ENCODE measurements at regions of chr5 and their contacts with region 1.

Region 1: GRCh38 chr5:103224118-103224893 is 34.3 kb upstream of the MACIR start:
- DNase-seq: peak; percentile 62
- H3K4me3 Mint-ChIP-seq: no peak overlapping the region
- H3K27ac Mint-ChIP-seq: no peak overlapping the region
- H3K4me1 Mint-ChIP-seq: peaks cover 4% of the 10 kb centered on the region
- H3K27me3 Mint-ChIP-seq: peaks cover 16% of the 10 kb centered on the region

Region 2: GRCh38 chr5:102681407-102681983 is 542.8 kb before region 1 on chr5:
- CTCF ChIA-PET with region 1: interaction called, 20 read pairs
- DNase-seq: peak; percentile 70
- H3K4me3 Mint-ChIP-seq: no peak overlapping the region
- H3K27ac Mint-ChIP-seq: no peak overlapping the region
- H3K4me1 Mint-ChIP-seq: no peaks in the 10 kb centered on the region
- H3K27me3 Mint-ChIP-seq: no peaks in the 10 kb centered on the region

Region 3: GRCh38 chr5:103139264-103139865 is 84.9 kb before region 1 on chr5:
- CTCF ChIA-PET with region 1: interaction called, 17 read pairs
- DNase-seq: peak; percentile 88
- H3K4me3 Mint-ChIP-seq: no peak overlapping the region
- H3K27ac Mint-ChIP-seq: no peak overlapping the region
- H3K4me1 Mint-ChIP-seq: no peaks in the 10 kb centered on the region
- H3K27me3 Mint-ChIP-seq: no peaks in the 10 kb centered on the region

Region 4: DNA sequence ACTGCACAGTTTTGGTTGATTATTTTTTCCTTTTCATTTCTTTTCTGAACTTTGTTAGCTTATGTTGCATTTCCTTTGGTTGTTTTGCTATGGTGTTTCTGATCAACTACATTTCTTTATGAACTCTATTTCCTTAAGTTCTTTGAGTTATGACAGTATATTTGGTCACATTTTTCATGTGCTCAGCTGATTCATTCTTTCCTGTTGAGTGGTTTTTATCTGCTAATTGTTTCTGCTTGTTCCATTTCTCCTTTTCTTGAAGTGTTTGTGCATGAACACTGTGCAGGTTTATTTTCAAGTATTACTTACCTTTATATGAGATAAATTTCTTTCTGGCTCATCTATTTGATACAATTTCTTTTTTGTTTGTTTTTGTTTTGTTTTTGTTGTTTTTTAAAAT is 16.7 kb before region 1 on chr5:
- CTCF ChIA-PET with region 1: interaction called, 10 read pairs
- DNase-seq: no peak
- H3K4me3 Mint-ChIP-seq: no peak overlapping the region
- H3K27ac Mint-ChIP-seq: peak overlapping the region; percentile 8
- H3K4me1 Mint-ChIP-seq: peaks cover 28% of the 10 kb centered on the region
- H3K27me3 Mint-ChIP-seq: no peaks in the 10 kb centered on the region

Region 5: GRCh38 chr5:103475629-103476240 is 251.4 kb after region 1 on chr5:
- CTCF ChIA-PET with region 1: interaction called, 20 read pairs
- DNase-seq: no peak
- H3K4me3 Mint-ChIP-seq: no peak overlapping the region
- H3K27ac Mint-ChIP-seq: no peak overlapping the region
- H3K4me1 Mint-ChIP-seq: no peaks in the 10 kb centered on the region
- H3K27me3 Mint-ChIP-seq: no peaks in the 10 kb centered on the region

Measured in activated naive CD4-positive, alpha-beta T cell treated with anti-CD3 and anti-CD28 coated beads, Interleukin-2, amount 10 ng/mL, durations not matched to agents 7 days and 5 days (primary cell).